Dendritic cell treated with granulocyte-macrophage colony-stimulating factor and Interleukin-4, amounts not matched to agents 40 ng/mL and 50 ng/mL, for 4 days (primary cell): ENCODE measurements at regions of chr13 and their contacts with region 1.

Region 1: DNA sequence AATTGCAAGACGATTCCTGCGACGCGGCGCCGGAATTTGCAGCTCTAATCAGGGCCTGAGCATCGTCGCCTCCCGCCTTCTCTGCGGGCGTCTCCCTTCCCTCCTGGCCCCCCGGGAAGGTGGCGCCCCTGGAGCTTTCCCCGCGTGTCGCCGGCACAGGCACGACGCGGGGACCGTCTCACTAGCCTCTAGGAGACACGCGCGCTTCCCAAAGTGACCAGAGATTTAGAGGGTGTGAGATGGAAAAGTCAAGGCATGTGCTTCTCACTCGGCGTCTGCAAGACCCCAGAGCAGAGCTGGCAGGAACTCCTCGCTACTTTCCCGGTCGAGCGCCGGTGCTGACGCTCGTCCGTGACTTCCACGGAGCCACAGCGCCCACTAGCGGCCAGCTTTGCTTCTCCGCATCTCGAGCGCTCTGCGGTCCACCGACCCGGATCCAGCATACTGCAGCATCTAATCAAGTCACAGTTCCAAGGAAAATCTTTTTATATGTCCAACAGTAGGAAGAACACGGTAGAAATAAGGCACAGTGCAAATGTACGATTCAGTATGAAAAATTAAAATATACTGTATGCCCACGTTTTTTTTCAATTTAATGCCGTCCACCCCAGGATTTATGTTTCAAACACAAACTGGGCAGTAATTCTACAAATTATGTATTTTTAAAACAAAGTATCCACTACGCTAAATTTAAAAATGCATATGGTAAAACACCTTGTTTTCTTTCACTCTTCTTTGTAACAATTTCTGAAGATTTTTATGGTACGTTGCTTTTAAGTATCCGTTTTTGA is 977 bp upstream of the EFNB2 start:
- H3K4me3 Mint-ChIP-seq: peak overlapping the region; percentile 93
- H3K27ac Mint-ChIP-seq: peak overlapping the region; percentile 2
- H3K4me1 Mint-ChIP-seq: peaks cover 21% of the 10 kb centered on the region
- H3K27me3 Mint-ChIP-seq: peaks cover 34% of the 10 kb centered on the region

Region 2: GRCh38 chr13:104773775-104774174 is 1762.7 kb before region 1 on chr13:
- intact Hi-C with region 1: loop called (anchors 10 kb)
- H3K4me3 Mint-ChIP-seq: no peak overlapping the region
- H3K27ac Mint-ChIP-seq: no peak overlapping the region
- H3K4me1 Mint-ChIP-seq: no peaks in the 10 kb centered on the region
- H3K27me3 Mint-ChIP-seq: no peaks in the 10 kb centered on the region

Region 3: GRCh38 chr13:106104281-106104901 is 432.0 kb before region 1 on chr13:
- intact Hi-C with region 1: no loop called
- H3K4me3 Mint-ChIP-seq: no peak overlapping the region
- H3K27ac Mint-ChIP-seq: no peak overlapping the region
- H3K4me1 Mint-ChIP-seq: no peaks in the 10 kb centered on the region
- H3K27me3 Mint-ChIP-seq: no peaks in the 10 kb centered on the region

Region 4: GRCh38 chr13:106357198-106357597 is 179.2 kb before region 1 on chr13:
- intact Hi-C with region 1: no loop called
- H3K4me3 Mint-ChIP-seq: no peak overlapping the region
- H3K27ac Mint-ChIP-seq: no peak overlapping the region
- H3K4me1 Mint-ChIP-seq: no peaks in the 10 kb centered on the region
- H3K27me3 Mint-ChIP-seq: no peaks in the 10 kb centered on the region

Region 5: GRCh38 chr13:106555631-106556328 is 19.3 kb after region 1 on chr13:
- intact Hi-C with region 1: no loop called
- H3K4me3 Mint-ChIP-seq: no peak overlapping the region
- H3K27ac Mint-ChIP-seq: no peak overlapping the region
- H3K4me1 Mint-ChIP-seq: peaks cover 36% of the 10 kb centered on the region
- H3K27me3 Mint-ChIP-seq: no peaks in the 10 kb centered on the region

Region 6: GRCh38 chr13:106567474-106568298 is 31.2 kb after region 1 on chr13 and contains the start of gene ARGLU1:
- intact Hi-C with region 1: loop called (anchors 2 kb)
- H3K4me3 Mint-ChIP-seq: peak within 1 kb of the TSS; percentile 99
- H3K27ac Mint-ChIP-seq: peak within 1 kb of the TSS; percentile 99
- H3K4me1 Mint-ChIP-seq: peaks cover 36% of the 10 kb centered on the region
- H3K27me3 Mint-ChIP-seq: no peaks in the 10 kb centered on the region

Region 7: GRCh38 chr13:106917673-106918556 is 381.5 kb after region 1 on chr13:
- intact Hi-C with region 1: loop called (anchors 5 kb)
- H3K4me3 Mint-ChIP-seq: peak overlapping the region; percentile 83
- H3K27ac Mint-ChIP-seq: peak overlapping the region; percentile 82
- H3K4me1 Mint-ChIP-seq: peaks cover 11% of the 10 kb centered on the region
- H3K27me3 Mint-ChIP-seq: peaks cover 33% of the 10 kb centered on the region

Region 8: DNA sequence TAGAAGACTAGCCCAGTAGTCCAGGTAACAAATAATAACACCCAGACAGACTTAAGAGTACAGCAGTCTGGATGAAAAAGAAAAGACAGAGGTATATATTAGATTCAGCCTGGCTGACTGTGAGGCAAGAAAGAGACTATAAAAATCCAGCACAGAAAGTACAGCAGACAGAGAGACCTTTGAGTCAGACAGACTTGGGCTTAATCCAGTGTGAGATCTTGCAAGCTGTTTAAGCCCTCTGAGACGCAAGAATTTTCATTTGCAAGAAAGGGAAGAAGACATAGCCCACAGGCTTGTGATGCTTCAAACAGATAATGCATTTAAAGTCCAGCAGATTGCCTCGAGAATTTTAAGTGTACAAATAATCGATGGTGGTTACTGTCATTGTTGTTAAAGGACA is 1207.5 kb after region 1 on chr13:
- intact Hi-C with region 1: no loop called
- H3K4me3 Mint-ChIP-seq: no peak overlapping the region
- H3K27ac Mint-ChIP-seq: no peak overlapping the region
- H3K4me1 Mint-ChIP-seq: no peaks in the 10 kb centered on the region
- H3K27me3 Mint-ChIP-seq: no peaks in the 10 kb centered on the region